ENCODE measurements at regions of chr11 and their contacts with region 1.

Region 1: GRCh38 chr11:61855939-61856680 is 28.0 kb downstream of the FADS2 start:
- DNase-seq: no peak

Region 2: DNA sequence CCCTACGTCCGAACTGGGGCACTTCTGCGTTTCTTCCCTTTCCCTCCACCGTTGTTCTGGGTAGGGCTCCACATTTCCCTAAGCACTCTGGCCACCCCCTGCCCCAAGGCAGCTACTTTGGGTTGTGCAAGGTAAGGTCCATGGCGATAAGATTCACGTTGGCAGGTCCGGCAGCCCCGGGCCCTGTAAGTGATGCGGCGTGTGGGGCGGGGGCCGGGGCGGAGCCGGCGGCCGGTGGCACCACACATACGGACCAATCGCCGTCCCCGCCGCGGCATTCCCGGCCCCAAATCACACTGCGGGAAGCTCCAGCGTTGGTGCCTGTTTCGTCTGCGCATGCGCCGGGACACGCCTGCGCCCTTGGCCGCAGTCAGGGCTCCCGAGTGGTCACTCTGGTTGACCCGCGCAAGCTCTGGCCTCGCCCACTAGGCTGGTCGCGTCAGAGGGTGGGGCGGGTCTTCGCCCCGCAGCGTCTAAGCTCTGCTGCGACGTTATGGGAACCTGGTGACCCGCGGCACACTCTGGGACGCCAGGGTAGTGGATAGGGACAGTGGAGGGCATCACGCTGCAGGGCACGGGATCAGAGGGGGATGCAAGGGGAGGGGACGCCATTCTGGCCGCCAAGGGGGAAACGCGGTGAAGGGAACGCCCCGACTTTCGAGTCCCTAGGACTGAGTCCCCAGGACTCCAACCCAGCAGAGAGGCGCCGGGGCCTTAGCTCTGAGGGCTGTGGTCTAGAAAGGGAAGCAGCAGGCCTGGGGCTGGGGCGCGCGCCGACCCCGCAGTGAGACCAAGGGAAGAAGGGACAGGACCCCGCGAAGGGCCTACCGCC is 40.9 kb before region 1 on chr11:
- intact Hi-C with region 1: loop called in 1 of 2 experiments (anchors 1 kb)
- DNase-seq: peak; percentile 99